Sciatic nerve (tissue), 2 donors: ENCODE measurements at regions of chr11 and their contacts with region 1.

Region 1: DNA sequence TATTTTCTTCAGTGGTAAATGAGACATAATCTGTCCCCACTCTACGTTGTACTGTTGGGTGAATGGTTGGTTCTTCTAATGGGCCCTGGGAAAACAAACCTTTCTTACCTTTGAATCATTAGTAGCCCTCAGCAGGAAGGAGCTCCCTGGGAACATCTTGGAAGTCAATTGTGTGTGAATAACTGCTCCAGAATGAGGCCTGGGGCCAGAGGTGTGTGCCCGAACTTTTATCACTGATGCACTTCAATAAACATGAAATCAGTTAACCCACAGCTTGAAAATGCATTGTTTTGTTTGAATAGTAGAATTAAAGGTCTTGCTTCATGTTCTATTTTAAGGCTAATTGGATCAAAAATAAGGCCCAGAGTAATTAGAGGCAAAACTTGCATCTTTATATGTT is 67.1 kb downstream of the NAV2 start:
- DNase-seq: no peak
- ATAC-seq: no peak

Region 2: DNA sequence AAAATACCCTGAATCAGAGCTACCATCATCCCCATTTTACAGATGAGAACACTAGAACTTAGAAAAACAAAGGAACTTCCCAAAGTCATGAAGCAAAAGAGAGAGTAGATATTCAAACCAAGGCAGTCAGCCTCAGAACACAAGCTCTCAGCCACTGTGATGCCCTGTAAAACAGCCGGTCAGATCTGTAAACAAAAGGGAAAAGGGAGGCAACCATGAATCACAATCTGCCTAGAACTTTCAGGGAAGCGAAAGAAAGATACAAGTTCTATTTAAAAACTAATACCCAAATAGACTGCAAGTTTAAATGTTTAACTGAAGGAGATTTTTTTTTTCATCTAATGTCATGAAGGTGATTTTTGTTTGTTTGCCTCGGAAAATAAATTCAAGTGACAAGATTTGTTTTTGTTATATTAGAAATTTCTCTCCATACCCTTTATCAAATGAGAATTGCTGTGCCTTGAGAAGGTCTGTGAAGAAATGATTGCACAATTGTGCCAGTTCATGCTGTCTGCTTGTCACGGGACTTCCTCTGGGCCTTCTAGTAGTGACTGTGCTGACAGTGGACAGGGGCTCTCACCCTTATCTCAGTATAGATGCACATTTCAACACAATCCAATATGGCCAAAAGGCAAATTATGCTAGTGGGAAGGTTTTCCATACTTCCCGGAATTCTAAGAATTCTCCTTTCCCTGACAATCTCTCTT is 1502.0 kb before region 1 on chr11:
- intact Hi-C with region 1: loop called (anchors 5 kb)
- DNase-seq: no peak
- ATAC-seq: peak; percentile 74